CD4-positive, alpha-beta T cell (primary cell): ENCODE measurements at regions of chr9 and their contacts with region 1.

Region 1: GRCh38 chr9:76717613-76718012 is 46.6 kb upstream of the PCA3 start:
- DNase-seq: peak in 3 of 14 experiments; percentile 7 to 38 (median 25)
- ATAC-seq: no peak
- H3K4me3 ChIP-seq: no peak overlapping the region
- H3K4me3 Mint-ChIP-seq: no peak overlapping the region
- H3K27ac ChIP-seq: no peak overlapping the region
- H3K27ac Mint-ChIP-seq: no peak overlapping the region
- H3K4me1 ChIP-seq: no peaks in the 10 kb centered on the region
- H3K4me1 Mint-ChIP-seq: no peaks in the 10 kb centered on the region
- H3K27me3 ChIP-seq: peaks cover 0 to 4% of the 10 kb centered on the region in 2 experiments
- H3K27me3 Mint-ChIP-seq: peaks cover 17% of the 10 kb centered on the region
- CTCF ChIP-seq: no peak

Region 2: GRCh38 chr9:76704593-76705204 is 12.9 kb before region 1 on chr9:
- CTCF ChIA-PET with region 1: no interaction called
- POLR2A ChIA-PET with region 1: no interaction called
- intact Hi-C with region 1: loop called in 1 of 2 experiments (anchors 2 kb)
- DNase-seq: peak in 4 of 14 experiments; percentile 12 to 77 (median 66)
- ATAC-seq: no peak
- H3K4me3 ChIP-seq: no peak overlapping the region
- H3K4me3 Mint-ChIP-seq: no peak overlapping the region
- H3K27ac ChIP-seq: no peak overlapping the region
- H3K27ac Mint-ChIP-seq: no peak overlapping the region
- H3K4me1 ChIP-seq: peaks cover 3% of the 10 kb centered on the region
- H3K4me1 Mint-ChIP-seq: peaks cover 5% of the 10 kb centered on the region
- H3K27me3 ChIP-seq: peaks cover 5 to 9% of the 10 kb centered on the region in 2 experiments
- H3K27me3 Mint-ChIP-seq: peaks cover 48% of the 10 kb centered on the region
- CTCF ChIP-seq: peak; percentile 72

Region 3: DNA sequence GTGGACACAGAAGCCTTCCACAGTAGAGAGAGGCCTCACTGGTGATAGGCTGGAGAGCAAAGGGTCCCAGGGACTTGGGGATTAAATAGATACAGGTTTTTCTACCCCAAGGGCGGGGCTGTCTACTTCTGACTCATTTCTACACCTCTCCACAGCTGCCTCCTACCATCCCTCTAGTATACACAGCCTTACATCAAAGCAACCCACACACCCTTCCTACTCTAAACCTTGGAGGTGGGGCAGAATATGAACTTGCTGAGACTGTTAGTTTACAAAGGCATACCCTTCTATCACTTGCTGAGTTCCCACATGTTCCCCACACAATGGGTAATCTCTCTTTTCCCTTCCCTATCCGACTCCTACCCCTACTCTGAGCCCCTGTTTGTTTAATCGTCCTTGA is 26.7 kb after region 1 on chr9:
- CTCF ChIA-PET with region 1: no interaction called
- POLR2A ChIA-PET with region 1: no interaction called
- intact Hi-C with region 1: no loop called
- DNase-seq: no peak
- ATAC-seq: no peak
- H3K4me3 ChIP-seq: no peak overlapping the region
- H3K4me3 Mint-ChIP-seq: no peak overlapping the region
- H3K27ac ChIP-seq: no peak overlapping the region
- H3K27ac Mint-ChIP-seq: no peak overlapping the region
- H3K4me1 ChIP-seq: no peaks in the 10 kb centered on the region
- H3K4me1 Mint-ChIP-seq: no peaks in the 10 kb centered on the region
- H3K27me3 ChIP-seq: no peaks in the 10 kb centered on the region
- H3K27me3 Mint-ChIP-seq: no peaks in the 10 kb centered on the region
- CTCF ChIP-seq: no peak

Region 4: GRCh38 chr9:76773036-76773435 is 55.4 kb after region 1 on chr9:
- CTCF ChIA-PET with region 1: no interaction called
- POLR2A ChIA-PET with region 1: no interaction called
- intact Hi-C with region 1: no loop called
- DNase-seq: no peak
- ATAC-seq: no peak
- H3K4me3 ChIP-seq: no peak overlapping the region
- H3K4me3 Mint-ChIP-seq: no peak overlapping the region
- H3K27ac ChIP-seq: no peak overlapping the region
- H3K27ac Mint-ChIP-seq: no peak overlapping the region
- H3K4me1 ChIP-seq: no peaks in the 10 kb centered on the region
- H3K4me1 Mint-ChIP-seq: no peaks in the 10 kb centered on the region
- H3K27me3 ChIP-seq: no peaks in the 10 kb centered on the region
- H3K27me3 Mint-ChIP-seq: no peaks in the 10 kb centered on the region
- CTCF ChIP-seq: no peak